SK-N-SH (cell line): ENCODE measurements at regions of chr3 and their contacts with region 1.

Region 1: GRCh38 chr3:78988324-78988723 is 779.5 kb downstream of the ROBO1 start:
- DNase-seq: peak; percentile 27
- H3K4me3 ChIP-seq: no peak overlapping the region
- H3K27ac ChIP-seq: no peak overlapping the region
- H3K4me1 ChIP-seq: peaks cover 0 to 12% of the 10 kb centered on the region in 2 experiments; a peak in 2 of 4 replicates
- H3K27me3 ChIP-seq: no peaks in the 10 kb centered on the region
- CTCF ChIP-seq: peak; percentile 67
- EP300 ChIP-seq: no peak
- RAD21 ChIP-seq: peak; percentile 79

Region 2: DNA sequence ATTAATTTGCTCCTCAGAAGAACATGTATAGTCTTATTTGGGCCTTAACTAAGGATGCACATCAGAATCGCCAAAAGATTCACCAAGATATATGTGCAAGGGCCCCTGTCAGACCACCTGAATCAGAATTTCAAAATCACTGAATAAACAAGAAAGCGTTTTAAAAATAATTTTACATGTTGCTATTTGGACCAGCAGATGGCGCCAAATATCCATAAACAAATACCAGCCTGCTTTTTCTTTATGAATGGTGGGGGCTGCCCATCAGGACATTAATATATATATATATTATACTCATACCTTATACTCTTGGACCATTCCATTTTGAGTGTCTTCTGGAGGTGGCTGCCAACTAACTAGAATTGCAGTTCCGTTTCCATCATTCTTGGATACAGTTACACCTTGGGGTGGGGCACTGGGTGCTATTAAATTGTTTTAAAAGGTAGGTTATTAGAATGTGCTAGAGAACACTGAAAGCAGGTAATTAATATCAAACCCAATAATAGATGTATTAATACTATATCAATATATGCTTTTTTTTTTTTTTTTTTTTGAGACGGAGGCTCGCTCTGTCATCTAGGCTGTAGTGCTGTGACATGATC is 328.8 kb before region 1 on chr3:
- CTCF ChIA-PET with region 1: interaction called, 26 read pairs
- POLR2A ChIA-PET with region 1: no interaction called
- DNase-seq: peak; percentile 21
- H3K4me3 ChIP-seq: no peak overlapping the region
- H3K27ac ChIP-seq: no peak overlapping the region
- H3K4me1 ChIP-seq: no peaks in the 10 kb centered on the region
- H3K27me3 ChIP-seq: no peaks in the 10 kb centered on the region
- CTCF ChIP-seq: peak; percentile 76
- EP300 ChIP-seq: no peak
- RAD21 ChIP-seq: peak; percentile 84

Region 3: DNA sequence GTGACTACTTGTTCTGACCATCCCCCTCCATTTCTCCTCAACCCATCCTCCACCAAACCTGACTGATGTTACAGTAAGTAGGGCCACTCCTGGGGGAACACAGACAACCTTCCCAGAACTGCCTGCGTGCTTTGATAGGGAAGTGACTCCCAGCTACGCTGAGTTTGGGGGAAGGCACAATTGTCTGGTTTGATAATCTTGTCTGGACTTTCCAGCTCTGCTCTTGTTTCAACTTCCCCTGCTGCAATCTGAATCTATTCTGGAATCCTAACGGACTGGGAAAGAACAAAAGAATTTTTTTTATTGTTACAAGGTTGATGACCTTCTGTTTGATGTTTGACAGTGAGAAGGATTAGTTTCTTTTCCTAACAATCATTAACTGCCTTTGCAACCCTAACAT is 116.1 kb before region 1 on chr3:
- CTCF ChIA-PET with region 1: no interaction called
- POLR2A ChIA-PET with region 1: no interaction called
- DNase-seq: no peak
- H3K4me3 ChIP-seq: peak overlapping the region in 1 of 2 experiments; percentile 38; a peak in 1 of 4 replicates
- H3K27ac ChIP-seq: peak overlapping the region; percentile 50 to 79
- H3K4me1 ChIP-seq: peaks cover 25 to 59% of the 10 kb centered on the region in 2 experiments; a peak in 3 of 4 replicates
- H3K27me3 ChIP-seq: no peaks in the 10 kb centered on the region
- CTCF ChIP-seq: no peak
- EP300 ChIP-seq: no peak
- RAD21 ChIP-seq: no peak

Region 4: GRCh38 chr3:78967061-78967460 is 21.3 kb before region 1 on chr3:
- CTCF ChIA-PET with region 1: no interaction called
- POLR2A ChIA-PET with region 1: no interaction called
- DNase-seq: no peak
- H3K4me3 ChIP-seq: no peak overlapping the region
- H3K27ac ChIP-seq: no peak overlapping the region
- H3K4me1 ChIP-seq: peaks cover 5 to 10% of the 10 kb centered on the region in 2 experiments; a peak in 3 of 4 replicates
- H3K27me3 ChIP-seq: no peaks in the 10 kb centered on the region
- CTCF ChIP-seq: no peak
- EP300 ChIP-seq: no peak
- RAD21 ChIP-seq: no peak

Region 5: GRCh38 chr3:79002465-79003372 is 14.4 kb after region 1 on chr3:
- CTCF ChIA-PET with region 1: interaction called, 10 read pairs
- POLR2A ChIA-PET with region 1: no interaction called
- DNase-seq: no peak
- H3K4me3 ChIP-seq: peak overlapping the region in 1 of 2 experiments; percentile 20; a peak in 1 of 4 replicates
- H3K27ac ChIP-seq: peak overlapping the region; percentile 9 to 64; a peak in 3 of 4 replicates
- H3K4me1 ChIP-seq: peaks cover 14 to 20% of the 10 kb centered on the region in 2 experiments; a peak in 3 of 4 replicates
- H3K27me3 ChIP-seq: no peaks in the 10 kb centered on the region
- CTCF ChIP-seq: no peak
- EP300 ChIP-seq: peak in 1 of 2 experiments; percentile 68; a peak in 2 of 4 replicates
- RAD21 ChIP-seq: no peak